Activated T-helper 2 cell treated with anti-CD3 and anti-CD28 coated beads, Interferon-gamma antibody, Interleukin-2, Interleukin-4, amounts not matched to agents 10 μg/mL and 5 μg/mL and 100 μg/mL, durations not matched to agents 14 hours and 24 hours and 36 hours (primary cell): ENCODE measurements at regions of chr11 and their contacts with region 1.

Region 1: DNA sequence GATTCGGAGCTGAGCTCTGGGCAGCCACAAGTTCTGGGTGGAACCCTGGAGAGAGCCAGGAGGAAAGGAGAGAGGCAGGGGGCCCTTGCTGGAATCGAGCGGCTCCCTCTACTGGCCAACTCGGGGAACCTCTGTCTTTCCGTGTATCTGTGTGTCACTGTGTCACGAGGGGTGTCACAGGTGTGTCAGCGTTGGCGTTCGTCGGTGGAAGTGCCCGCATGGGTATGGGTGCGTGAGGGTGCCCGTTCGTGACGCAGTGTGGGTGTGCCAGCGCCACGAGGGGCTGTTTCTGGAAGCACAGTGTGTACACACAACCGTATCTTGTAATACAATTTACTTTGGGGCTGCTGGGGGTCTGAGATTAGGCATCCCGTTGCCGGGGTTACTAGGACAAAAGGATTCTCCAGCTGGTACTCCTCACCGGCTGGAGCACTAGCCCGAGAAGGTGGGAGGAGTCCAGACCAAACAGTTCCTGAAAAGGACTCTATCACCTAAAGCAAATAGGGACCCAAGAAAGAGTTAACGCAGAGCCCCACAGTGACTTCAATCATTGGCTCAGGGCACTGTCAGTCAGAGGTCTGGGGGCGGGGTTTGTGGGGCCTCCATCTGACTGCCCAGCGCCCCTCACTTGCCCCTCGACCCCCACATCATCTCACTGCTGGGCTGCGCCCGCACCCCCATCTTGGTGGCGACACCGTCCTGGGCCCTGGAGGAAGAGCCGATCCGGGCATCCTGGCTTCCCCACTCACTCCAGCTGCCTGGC is 2.6 kb upstream of the BCL9L start:
- DNase-seq: peak; percentile 86
- H3K4me3 Mint-ChIP-seq: peak overlapping the region; percentile 84
- H3K27ac Mint-ChIP-seq: peak overlapping the region; percentile 91
- H3K4me1 Mint-ChIP-seq: peaks cover 46% of the 10 kb centered on the region
- H3K27me3 Mint-ChIP-seq: no peaks in the 10 kb centered on the region

Region 2: DNA sequence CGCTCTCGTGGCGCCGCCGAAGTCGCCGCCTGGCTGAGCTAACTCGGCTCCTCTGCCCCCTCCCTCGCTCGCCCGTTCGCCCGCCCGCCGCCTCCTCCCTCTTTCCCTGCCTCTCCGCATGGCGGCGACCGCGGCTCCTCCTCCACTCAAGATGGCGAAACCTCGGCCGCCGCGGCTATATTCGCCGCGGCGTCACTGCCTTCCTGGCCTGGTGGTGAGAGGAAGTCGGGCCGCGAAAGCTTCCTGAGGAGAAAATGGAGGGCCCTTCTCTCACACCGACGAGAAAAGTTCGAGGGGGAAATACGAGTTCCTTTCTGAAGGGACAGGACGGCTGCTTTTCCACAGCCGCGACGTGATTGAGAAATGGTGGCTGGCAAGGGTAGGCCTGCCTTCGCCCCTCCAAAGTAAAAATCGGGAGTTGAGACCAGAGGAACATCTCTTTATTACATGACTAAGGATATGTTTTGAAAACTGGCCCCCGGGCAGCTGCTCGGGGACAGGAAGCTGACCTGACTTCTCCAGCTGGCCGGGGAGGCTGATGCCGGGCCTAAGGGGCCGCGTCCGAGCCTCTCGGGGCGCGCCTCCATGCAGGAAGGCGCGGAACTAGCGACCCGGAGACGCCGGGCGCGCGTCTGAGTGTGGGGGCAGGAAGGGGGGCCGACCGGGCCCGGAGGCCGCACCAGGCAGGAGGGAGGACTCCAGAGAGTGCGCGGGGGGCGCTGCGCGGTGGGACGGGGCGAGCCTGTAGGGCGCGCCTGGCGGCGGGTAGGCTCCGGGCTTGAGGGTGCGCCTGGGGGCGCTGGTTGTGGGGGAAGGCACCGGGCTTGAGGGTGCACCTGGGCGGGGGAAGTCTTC is 137.0 kb before region 1 on chr11 and contains the start of gene DDX6:
- intact Hi-C with region 1: loop called (anchors 1 kb)
- DNase-seq: peak; percentile 87
- H3K4me3 Mint-ChIP-seq: peak within 1 kb of the TSS; percentile 97
- H3K27ac Mint-ChIP-seq: peak within 1 kb of the TSS; percentile 96
- H3K4me1 Mint-ChIP-seq: peaks cover 25% of the 10 kb centered on the region
- H3K27me3 Mint-ChIP-seq: no peaks in the 10 kb centered on the region
- total RNA-seq, gene DDX6: 132 and 135 TPM in 2 replicates

Region 3: GRCh38 chr11:118907051-118908042 is 20.9 kb before region 1 on chr11:
- intact Hi-C with region 1: loop called (anchors 1 kb)
- DNase-seq: peak; percentile 80
- H3K4me3 Mint-ChIP-seq: no peak overlapping the region
- H3K27ac Mint-ChIP-seq: no peak overlapping the region
- H3K4me1 Mint-ChIP-seq: peaks cover 26% of the 10 kb centered on the region
- H3K27me3 Mint-ChIP-seq: no peaks in the 10 kb centered on the region

Region 4: GRCh38 chr11:118956094-118956846 is 28.0 kb after region 1 on chr11 and contains the start of gene UPK2:
- intact Hi-C with region 1: loop called (anchors 1 kb)
- DNase-seq: peak; percentile 76
- H3K4me3 Mint-ChIP-seq: no peak within 1 kb of the TSS
- H3K27ac Mint-ChIP-seq: no peak within 1 kb of the TSS
- H3K4me1 Mint-ChIP-seq: no peaks in the 10 kb centered on the region
- H3K27me3 Mint-ChIP-seq: peaks cover 18% of the 10 kb centered on the region
- total RNA-seq, gene UPK2: 0.21 TPM in 1 of 2 replicates, not detected in the other

Region 5: GRCh38 chr11:119018074-119018938 is 90.0 kb after region 1 on chr11 and contains the starts of genes RPS25 and TRAPPC4:
- intact Hi-C with region 1: loop called (anchors 5 kb)
- DNase-seq: peak; percentile 93
- H3K4me3 Mint-ChIP-seq: peak within 1 kb of the TSS; percentile 99
- H3K27ac Mint-ChIP-seq: peak within 1 kb of the TSS; percentile 100
- H3K4me1 Mint-ChIP-seq: peaks cover 25% of the 10 kb centered on the region
- H3K27me3 Mint-ChIP-seq: no peaks in the 10 kb centered on the region
- total RNA-seq, gene RPS25: 1,728 and 1,773 TPM in 2 replicates
- total RNA-seq, gene TRAPPC4: 121 and 128 TPM in 2 replicates